MCF 10A (cell line): ENCODE measurements at regions of chr5 and their contacts with region 1.

Region 1: DNA sequence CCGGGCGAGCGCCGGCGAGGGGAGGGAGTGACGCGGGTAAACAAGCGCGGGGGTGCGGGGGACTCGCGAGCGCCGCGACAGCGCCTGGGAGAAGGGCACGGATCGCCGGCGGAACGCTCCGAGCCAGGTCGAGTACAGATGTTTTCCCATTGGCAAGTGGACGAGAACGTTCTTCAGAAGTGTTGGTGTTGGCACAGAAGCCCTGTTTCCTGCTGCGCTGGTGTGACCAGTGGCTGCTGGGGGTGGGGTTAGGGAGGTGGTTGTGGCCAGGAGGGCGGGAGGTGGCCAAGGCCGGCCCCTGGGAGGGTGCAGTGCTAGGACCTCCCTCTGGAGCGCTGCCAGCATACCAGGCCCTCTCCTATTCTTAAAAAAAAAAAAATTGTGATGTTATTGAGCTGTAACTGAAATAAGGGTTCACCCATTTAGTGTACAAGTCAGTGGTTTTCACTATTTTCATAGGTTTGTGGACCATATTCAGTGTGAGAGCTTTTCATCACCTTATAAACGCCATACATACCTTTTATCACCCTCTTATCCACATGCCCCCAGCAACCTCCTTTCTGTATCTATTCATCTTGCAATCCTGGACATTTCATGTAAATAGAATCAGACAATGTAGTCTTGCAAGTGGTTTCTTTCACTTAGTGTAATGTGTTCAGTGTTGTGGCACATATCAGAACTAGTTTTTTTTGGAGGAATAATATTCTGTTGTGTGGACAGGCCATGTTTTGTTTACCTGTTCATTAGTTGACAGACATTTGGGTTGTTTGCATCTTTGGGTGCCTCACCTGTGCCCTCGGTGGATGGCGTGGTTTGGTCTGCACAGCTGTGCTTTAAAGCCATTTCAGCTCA is 1.1 kb downstream of the SQSTM1 start:
- DNase-seq: peak; percentile 99
- H3K4me3 Mint-ChIP-seq: peak overlapping the region; percentile 94
- H3K27ac Mint-ChIP-seq: peak overlapping the region; percentile 95
- H3K4me1 Mint-ChIP-seq: peaks cover 48% of the 10 kb centered on the region
- H3K27me3 Mint-ChIP-seq: no peaks in the 10 kb centered on the region
- CTCF ChIP-seq: no peak

Region 2: GRCh38 chr5:179697993-179698934 is 123.5 kb before region 1 on chr5:
- CTCF ChIA-PET with region 1: interaction called, 3 read pairs
- POLR2A ChIA-PET with region 1: interaction called, 11 read pairs
- intact Hi-C with region 1: no loop called
- DNase-seq: peak; percentile 100
- H3K4me3 Mint-ChIP-seq: peak overlapping the region; percentile 94
- H3K27ac Mint-ChIP-seq: peak overlapping the region; percentile 99
- H3K4me1 Mint-ChIP-seq: peaks cover 29% of the 10 kb centered on the region
- H3K27me3 Mint-ChIP-seq: no peaks in the 10 kb centered on the region
- CTCF ChIP-seq: no peak

Region 3: GRCh38 chr5:179795863-179796833 is 25.7 kb before region 1 on chr5:
- CTCF ChIA-PET with region 1: interaction called, 16 read pairs
- POLR2A ChIA-PET with region 1: interaction called, 25 read pairs
- intact Hi-C with region 1: no loop called
- DNase-seq: peak; percentile 88
- H3K4me3 Mint-ChIP-seq: peak overlapping the region; percentile 71
- H3K27ac Mint-ChIP-seq: peak overlapping the region; percentile 26
- H3K4me1 Mint-ChIP-seq: peaks cover 8% of the 10 kb centered on the region
- H3K27me3 Mint-ChIP-seq: no peaks in the 10 kb centered on the region
- CTCF ChIP-seq: peak; percentile 86

Region 4: GRCh38 chr5:179806250-179807222 is 15.3 kb before region 1 on chr5 and contains the start of gene MGAT4B:
- CTCF ChIA-PET with region 1: interaction called, 3 read pairs
- POLR2A ChIA-PET with region 1: interaction called, 134 read pairs
- intact Hi-C with region 1: loop called (anchors 1 kb)
- DNase-seq: peak; percentile 87
- H3K4me3 Mint-ChIP-seq: peak within 1 kb of the TSS; percentile 82
- H3K27ac Mint-ChIP-seq: peak within 1 kb of the TSS; percentile 92
- H3K4me1 Mint-ChIP-seq: peaks cover 29% of the 10 kb centered on the region
- H3K27me3 Mint-ChIP-seq: no peaks in the 10 kb centered on the region
- CTCF ChIP-seq: no peak
- total RNA-seq, gene MGAT4B: 153 and 198 TPM in 2 replicates

Region 5: DNA sequence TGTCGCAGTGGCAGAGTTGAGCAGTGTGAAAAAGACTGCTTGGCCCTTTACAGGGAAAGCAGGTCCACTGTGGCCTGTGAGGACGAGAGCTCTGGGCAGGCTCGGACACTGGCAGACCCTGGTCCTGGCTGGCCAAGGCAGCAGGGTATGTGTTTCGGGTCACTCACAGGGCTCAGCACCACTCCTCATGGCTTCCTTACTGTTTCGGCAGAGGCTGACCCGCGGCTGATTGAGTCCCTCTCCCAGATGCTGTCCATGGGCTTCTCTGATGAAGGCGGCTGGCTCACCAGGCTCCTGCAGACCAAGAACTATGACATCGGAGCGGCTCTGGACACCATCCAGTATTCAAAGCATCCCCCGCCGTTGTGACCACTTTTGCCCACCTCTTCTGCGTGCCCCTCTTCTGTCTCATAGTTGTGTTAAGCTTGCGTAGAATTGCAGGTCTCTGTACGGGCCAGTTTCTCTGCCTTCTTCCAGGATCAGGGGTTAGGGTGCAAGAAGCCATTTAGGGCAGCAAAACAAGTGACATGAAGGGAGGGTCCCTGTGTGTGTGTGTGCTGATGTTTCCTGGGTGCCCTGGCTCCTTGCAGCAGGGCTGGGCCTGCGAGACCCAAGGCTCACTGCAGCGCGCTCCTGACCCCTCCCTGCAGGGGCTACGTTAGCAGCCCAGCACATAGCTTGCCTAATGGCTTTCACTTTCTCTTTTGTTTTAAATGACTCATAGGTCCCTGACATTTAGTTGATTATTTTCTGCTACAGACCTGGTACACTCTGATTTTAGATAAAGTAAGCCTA is 14.6 kb after region 1 on chr5:
- CTCF ChIA-PET with region 1: interaction called, 4 read pairs
- POLR2A ChIA-PET with region 1: interaction called, 14 read pairs
- intact Hi-C with region 1: no loop called
- DNase-seq: no peak
- H3K4me3 Mint-ChIP-seq: no peak overlapping the region
- H3K27ac Mint-ChIP-seq: peak overlapping the region; percentile 63
- H3K4me1 Mint-ChIP-seq: no peaks in the 10 kb centered on the region
- H3K27me3 Mint-ChIP-seq: no peaks in the 10 kb centered on the region
- CTCF ChIP-seq: no peak

Region 6: GRCh38 chr5:179858586-179859427 is 37.0 kb after region 1 on chr5 and contains the start of gene MRNIP:
- CTCF ChIA-PET with region 1: interaction called, 3 read pairs
- POLR2A ChIA-PET with region 1: interaction called, 31 read pairs
- intact Hi-C with region 1: loop called (anchors 2 kb)
- DNase-seq: peak; percentile 98
- H3K4me3 Mint-ChIP-seq: peak within 1 kb of the TSS; percentile 94
- H3K27ac Mint-ChIP-seq: peak within 1 kb of the TSS; percentile 83
- H3K4me1 Mint-ChIP-seq: peaks cover 11% of the 10 kb centered on the region
- H3K27me3 Mint-ChIP-seq: no peaks in the 10 kb centered on the region
- CTCF ChIP-seq: no peak
- total RNA-seq, gene MRNIP: 40.3 and 42.8 TPM in 2 replicates

Region 7: GRCh38 chr5:179907570-179908324 is 85.9 kb after region 1 on chr5 and contains the start of gene TBC1D9B:
- CTCF ChIA-PET with region 1: no interaction called
- POLR2A ChIA-PET with region 1: interaction called, 14 read pairs
- intact Hi-C with region 1: no loop called
- DNase-seq: peak; percentile 73
- H3K4me3 Mint-ChIP-seq: peak within 1 kb of the TSS; percentile 98
- H3K27ac Mint-ChIP-seq: peak within 1 kb of the TSS; percentile 82
- H3K4me1 Mint-ChIP-seq: peaks cover 7% of the 10 kb centered on the region
- H3K27me3 Mint-ChIP-seq: no peaks in the 10 kb centered on the region
- CTCF ChIP-seq: peak; percentile 34
- total RNA-seq, gene TBC1D9B: 162 and 166 TPM in 2 replicates